Posterior cingulate gyrus (tissue), 11 donors: ENCODE measurements at regions of chrX and their contacts with region 1.

Region 1: DNA sequence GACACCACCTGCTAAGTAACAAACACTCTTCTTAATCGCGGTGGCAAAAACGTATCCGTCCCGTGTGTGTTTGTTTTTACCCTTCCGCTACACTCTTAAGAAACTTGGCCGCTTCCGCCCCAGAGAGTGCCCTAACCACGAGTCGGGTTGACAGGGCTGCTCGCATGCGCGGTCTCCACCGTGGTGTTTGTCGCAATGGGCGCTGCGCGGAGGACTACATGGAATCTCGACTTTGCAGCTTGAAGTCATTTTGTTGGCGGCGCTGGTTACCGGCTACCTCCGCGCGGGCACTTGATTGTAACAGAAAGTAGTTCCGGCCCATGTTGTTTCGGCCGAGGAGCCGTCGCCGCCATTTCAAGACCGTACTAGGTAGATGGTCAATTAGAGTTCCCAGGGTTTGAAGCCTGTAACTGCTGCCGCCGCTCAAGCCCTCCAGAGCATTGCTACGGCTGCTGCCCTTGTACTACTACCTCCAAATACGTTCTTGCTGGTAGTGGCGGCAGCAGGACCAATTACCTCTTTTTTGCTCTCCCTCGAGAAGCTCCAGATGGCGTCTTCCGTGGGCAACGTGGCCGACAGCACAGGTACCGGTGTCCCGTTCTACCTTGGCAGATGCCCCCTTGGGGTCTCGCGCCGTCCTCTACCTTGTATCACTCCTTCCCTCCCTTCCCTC is at the start of gene OGT:
- DNase-seq: peak; percentile 83 to 98 (median 90)

Region 2: GRCh38 chrX:71365876-71366673 is 166.8 kb before region 1 on chrX and contains the start of gene TAF1:
- intact Hi-C with region 1: loop called (anchors 10 kb)
- DNase-seq: peak; percentile 86 to 98 (median 92)